ENCODE measurements at regions of chr7 and their contacts with region 1.

Region 1: GRCh38 chr7:154927624-154928143 is 75.2 kb downstream of the PAXIP1 start:
- DNase-seq: peak; percentile 68
- ATAC-seq: peak; percentile 56
- H3K4me3 Mint-ChIP-seq: no peak overlapping the region
- H3K27ac Mint-ChIP-seq: no peak overlapping the region
- H3K4me1 Mint-ChIP-seq: peaks cover 37% of the 10 kb centered on the region
- H3K27me3 Mint-ChIP-seq: peaks cover 2% of the 10 kb centered on the region
- CTCF ChIP-seq: 0 out of 2 replicates have a peak, but pooled peaks have one; percentile 23

Region 2: GRCh38 chr7:154767142-154767541 is 160.5 kb before region 1 on chr7:
- CTCF ChIA-PET with region 1: no interaction called
- POLR2A ChIA-PET with region 1: no interaction called
- DNase-seq: no peak
- ATAC-seq: no peak
- H3K4me3 Mint-ChIP-seq: no peak overlapping the region
- H3K27ac Mint-ChIP-seq: no peak overlapping the region
- H3K4me1 Mint-ChIP-seq: no peaks in the 10 kb centered on the region
- H3K27me3 Mint-ChIP-seq: peaks cover 18% of the 10 kb centered on the region
- CTCF ChIP-seq: no peak

Region 3: GRCh38 chr7:154947604-154948003 is 19.9 kb after region 1 on chr7:
- CTCF ChIA-PET with region 1: interaction called, 35 read pairs
- POLR2A ChIA-PET with region 1: no interaction called
- DNase-seq: no peak
- ATAC-seq: peak; percentile 65
- H3K4me3 Mint-ChIP-seq: no peak overlapping the region
- H3K27ac Mint-ChIP-seq: no peak overlapping the region
- H3K4me1 Mint-ChIP-seq: no peaks in the 10 kb centered on the region
- H3K27me3 Mint-ChIP-seq: no peaks in the 10 kb centered on the region
- CTCF ChIP-seq: no peak

Region 4: DNA sequence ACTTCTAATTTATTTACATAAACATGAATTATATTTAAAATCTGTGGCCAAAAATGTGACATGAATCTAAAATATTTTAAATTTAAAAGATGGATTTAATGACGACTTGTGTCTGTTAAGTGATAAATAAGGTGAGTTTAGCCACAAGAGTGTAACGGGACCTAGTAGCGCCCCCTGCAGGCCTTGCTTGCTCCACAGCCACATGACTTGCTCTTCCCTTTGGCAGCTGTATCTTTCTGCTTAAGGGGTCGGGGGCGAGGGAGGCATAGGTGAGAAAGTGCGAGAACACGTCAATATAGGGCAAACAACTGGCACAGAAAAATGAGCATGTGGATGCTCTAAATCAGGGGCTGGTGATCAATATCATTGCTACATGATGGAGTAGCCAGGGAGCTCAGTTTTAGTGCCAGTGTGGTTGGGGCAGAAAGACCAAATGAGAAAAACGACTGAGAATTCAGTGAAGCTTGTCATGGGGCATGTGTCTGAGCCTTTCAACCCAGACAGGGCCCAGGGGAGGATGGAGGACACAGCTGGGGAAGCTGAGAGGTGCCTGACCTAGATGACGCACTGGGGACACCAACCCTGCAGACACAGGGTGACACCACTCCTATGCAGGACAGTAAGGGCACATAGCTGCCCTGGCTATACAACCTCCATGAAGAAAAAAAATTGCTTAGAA is 25.5 kb after region 1 on chr7:
- CTCF ChIA-PET with region 1: interaction called, 35 read pairs
- POLR2A ChIA-PET with region 1: no interaction called
- DNase-seq: peak; percentile 86
- ATAC-seq: peak; percentile 92
- H3K4me3 Mint-ChIP-seq: no peak overlapping the region
- H3K27ac Mint-ChIP-seq: peak overlapping the region; percentile 84; the same call in 1 of the 2 replicates
- H3K4me1 Mint-ChIP-seq: no peaks in the 10 kb centered on the region
- H3K27me3 Mint-ChIP-seq: no peaks in the 10 kb centered on the region
- CTCF ChIP-seq: peak; percentile 82